BJ (cell line): ENCODE measurements at regions of chrX and their contacts with region 1.

Region 1: GRCh38 chrX:17046478-17047097 is 100.1 kb downstream of the REPS2 start:
- DNase-seq: no peak
- H3K4me3 ChIP-seq: no peak overlapping the region
- H3K27me3 ChIP-seq: peaks cover 3% of the 10 kb centered on the region
- CTCF ChIP-seq: peak; percentile 71

Region 2: GRCh38 chrX:16882702-16883486 is 163.7 kb before region 1 on chrX:
- CTCF ChIA-PET with region 1: interaction called, 38 read pairs
- POLR2A ChIA-PET with region 1: no interaction called
- DNase-seq: no peak
- H3K4me3 ChIP-seq: peak overlapping the region; percentile 47
- H3K27me3 ChIP-seq: no peaks in the 10 kb centered on the region
- CTCF ChIP-seq: peak; percentile 66